ENCODE measurements at regions of chr5 and their contacts with region 1.

Region 1: DNA sequence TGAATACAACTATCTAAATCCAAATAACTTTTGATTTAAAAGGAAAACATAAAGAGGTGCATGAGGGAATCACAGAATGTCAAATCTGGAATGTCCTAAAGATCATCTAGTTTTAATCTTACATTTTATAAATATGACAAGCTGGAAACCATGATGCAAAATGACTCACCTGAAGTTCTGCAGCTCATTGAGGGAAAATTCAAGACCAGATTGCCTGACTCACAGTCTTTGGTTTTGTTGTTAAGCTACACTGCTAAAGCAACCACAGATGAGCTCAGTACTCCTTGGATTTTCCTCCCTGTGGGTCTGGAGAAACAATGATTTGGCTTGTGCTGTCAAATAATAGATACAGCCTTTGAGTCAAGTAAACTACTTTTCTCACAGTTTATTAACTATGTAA is 19.1 kb upstream of the EDIL3 start:
- DNase-seq: no peak
- H3K4me3 ChIP-seq: no peak overlapping the region
- H3K27ac ChIP-seq: no peak overlapping the region
- H3K4me1 ChIP-seq: no peaks in the 10 kb centered on the region
- H3K27me3 ChIP-seq: no peaks in the 10 kb centered on the region
- CTCF ChIP-seq: no peak
- EP300 ChIP-seq: no peak
- POLR2A ChIP-seq: no peak
- RAD21 ChIP-seq: no peak

Region 2: GRCh38 chr5:84149094-84149493 is 254.7 kb before region 1 on chr5:
- CTCF ChIA-PET with region 1: no interaction called
- POLR2A ChIA-PET with region 1: no interaction called
- DNase-seq: no peak
- H3K4me3 ChIP-seq: no peak overlapping the region
- H3K27ac ChIP-seq: no peak overlapping the region
- H3K4me1 ChIP-seq: peaks cover 0 to 3% (median 0%) of the 10 kb centered on the region in 4 experiments; a peak in 1 of 7 replicates
- H3K27me3 ChIP-seq: no peaks in the 10 kb centered on the region
- CTCF ChIP-seq: no peak
- EP300 ChIP-seq: no peak
- POLR2A ChIP-seq: no peak
- RAD21 ChIP-seq: no peak; a peak in 1 of 4 replicates

Region 3: DNA sequence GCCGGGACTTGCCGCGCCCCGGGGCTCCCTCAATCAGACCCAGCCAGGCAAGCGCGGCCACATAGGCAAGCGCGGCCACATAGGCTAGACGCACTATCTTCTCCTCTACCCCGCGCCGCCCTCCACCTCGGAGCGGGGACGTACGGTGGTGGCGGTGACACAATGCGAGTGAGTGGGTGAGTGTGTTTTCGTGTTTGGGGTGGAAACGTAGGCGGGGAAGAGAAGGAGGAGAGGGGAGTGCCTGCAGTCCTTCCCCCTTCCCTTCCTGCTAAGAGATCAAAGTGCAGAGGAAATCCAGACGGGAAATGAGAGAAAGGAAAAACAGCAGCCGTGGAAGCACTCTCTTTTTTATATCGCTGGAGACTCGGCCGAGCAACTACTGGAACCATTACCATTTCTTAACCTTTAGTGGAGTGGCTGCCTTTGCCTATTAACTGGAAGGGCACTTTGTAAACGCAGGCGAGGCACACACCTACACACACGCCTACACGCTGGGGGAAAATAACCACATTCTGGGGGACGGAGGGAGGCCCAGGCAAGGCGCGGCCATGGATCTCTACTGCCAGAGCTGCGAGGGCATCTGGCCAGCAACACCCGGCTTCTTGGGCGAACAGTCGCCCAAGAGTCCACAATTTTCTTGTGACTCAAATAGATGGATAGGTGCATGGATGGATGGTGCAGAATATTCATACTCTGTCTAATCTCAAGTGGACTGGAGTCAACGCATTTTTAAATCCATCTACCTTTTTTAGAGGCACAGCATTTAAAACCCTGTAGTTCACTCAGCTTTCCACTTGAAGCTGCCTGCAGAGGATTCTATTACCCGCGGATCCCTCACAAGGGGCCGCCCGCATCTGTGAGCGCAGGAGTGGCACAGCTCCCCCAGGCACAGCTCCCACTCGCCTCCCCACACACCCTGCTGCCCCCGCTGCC is 21.1 kb before region 1 on chr5:
- CTCF ChIA-PET with region 1: no interaction called
- POLR2A ChIA-PET with region 1: interaction called, 10 read pairs
- DNase-seq: peak in 1 of 2 experiments; percentile 81
- H3K4me3 ChIP-seq: peak overlapping the region; percentile 78 to 93 (median 85)
- H3K27ac ChIP-seq: no peak overlapping the region
- H3K4me1 ChIP-seq: peaks cover 0 to 8% (median 2%) of the 10 kb centered on the region in 4 experiments; a peak in 3 of 7 replicates
- H3K27me3 ChIP-seq: peaks cover 0 to 3% (median 0%) of the 10 kb centered on the region in 4 experiments; a peak in 2 of 7 replicates
- CTCF ChIP-seq: no peak
- EP300 ChIP-seq: no peak
- POLR2A ChIP-seq: 0 out of 3 replicates have a peak, but pooled peaks of 1 of the 2 experiments have one; percentile 25
- RAD21 ChIP-seq: no peak; a peak in 2 of 4 replicates